ENCODE measurements at regions of chr22 and their contacts with region 1.

Region 1: GRCh38 chr22:30763815-30764686 is 69.4 kb downstream of the OSBP2 start:
- DNase-seq: peak; percentile 49 to 75 (median 57)
- ATAC-seq: peak; percentile 80
- H3K4me3 ChIP-seq: no peak overlapping the region
- H3K27ac ChIP-seq: no peak overlapping the region
- H3K4me1 ChIP-seq: no peaks in the 10 kb centered on the region; a peak in 1 of 5 replicates
- H3K27me3 ChIP-seq: peaks cover 0 to 9% of the 10 kb centered on the region in 2 experiments; a peak in 1 of 5 replicates
- CTCF ChIP-seq: peak; percentile 67 to 80 (median 75)
- EP300 ChIP-seq: no peak
- POLR2A ChIP-seq: no peak
- RAD21 ChIP-seq: peak; percentile 67 to 82

Region 2: DNA sequence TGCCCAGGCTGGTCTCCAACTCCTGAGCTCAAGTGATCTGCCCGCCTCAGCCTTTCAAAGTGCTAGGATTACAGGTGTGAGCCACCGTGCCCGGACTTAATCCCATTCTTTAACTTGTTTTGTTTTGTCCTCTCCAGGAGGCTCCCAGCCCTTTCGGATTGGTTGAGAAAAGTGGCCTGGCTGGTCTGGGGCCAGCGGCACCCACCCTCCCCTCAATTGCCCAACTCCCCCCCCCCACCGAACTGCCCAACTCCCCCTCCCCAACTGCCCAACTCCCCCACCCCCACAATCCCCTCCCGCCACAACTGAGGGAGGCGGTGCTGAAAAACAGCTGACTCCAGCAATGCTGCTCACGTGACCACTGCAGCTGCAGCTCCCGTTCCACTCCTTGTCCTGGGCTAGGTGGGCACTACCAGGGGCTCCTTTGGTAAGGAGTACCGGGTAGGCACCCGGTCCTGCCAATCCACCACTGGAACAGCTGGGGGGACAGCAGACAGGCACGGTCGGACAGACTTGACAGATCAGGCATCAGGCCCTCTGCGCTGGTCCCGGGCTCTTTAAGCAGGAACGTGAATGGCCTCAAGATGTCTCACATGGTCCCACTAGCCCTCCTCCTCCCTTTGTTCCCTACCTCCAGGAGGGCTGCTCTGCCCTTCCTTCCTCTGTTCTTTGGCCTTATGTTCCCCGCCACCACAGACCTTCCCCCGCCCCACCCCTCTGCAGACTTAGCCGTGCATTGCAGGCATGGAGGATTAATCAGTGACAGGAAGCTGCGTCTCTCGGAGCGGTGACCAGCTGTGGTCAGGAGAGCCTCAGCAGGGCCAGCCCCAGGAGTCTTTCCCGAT is 157.4 kb before region 1 on chr22 and contains the start of gene TCN2:
- CTCF ChIA-PET with region 1: no interaction called
- POLR2A ChIA-PET with region 1: no interaction called
- in situ Hi-C with region 1: no loop called
- intact Hi-C with region 1: no loop called
- DNase-seq: peak; percentile 49 to 73 (median 60)
- ATAC-seq: peak; percentile 80
- H3K4me3 ChIP-seq: peak within 1 kb of the TSS; percentile 41
- H3K27ac ChIP-seq: peak within 1 kb of the TSS; percentile 56
- H3K4me1 ChIP-seq: peaks cover 21 to 41% of the 10 kb centered on the region in 2 experiments
- H3K27me3 ChIP-seq: no peaks in the 10 kb centered on the region
- CTCF ChIP-seq: no peak
- EP300 ChIP-seq: no peak
- POLR2A ChIP-seq: no peak
- RAD21 ChIP-seq: no peak
- polyA plus RNA-seq, gene TCN2: 4.8 to 5.4 TPM

Region 3: GRCh38 chr22:30747493-30747892 is 16.6 kb before region 1 on chr22:
- CTCF ChIA-PET with region 1: no interaction called
- POLR2A ChIA-PET with region 1: no interaction called
- in situ Hi-C with region 1: no loop called
- intact Hi-C with region 1: no loop called
- DNase-seq: peak; percentile 17 to 47 (median 36)
- ATAC-seq: peak; percentile 92
- H3K4me3 ChIP-seq: no peak overlapping the region
- H3K27ac ChIP-seq: no peak overlapping the region
- H3K4me1 ChIP-seq: peaks cover 7 to 16% of the 10 kb centered on the region in 2 experiments; a peak in 3 of 5 replicates
- H3K27me3 ChIP-seq: no peaks in the 10 kb centered on the region
- CTCF ChIP-seq: no peak
- EP300 ChIP-seq: no peak
- POLR2A ChIP-seq: 0 out of 2 replicates have a peak, but pooled peaks have one; percentile 28
- RAD21 ChIP-seq: no peak

Region 4: DNA sequence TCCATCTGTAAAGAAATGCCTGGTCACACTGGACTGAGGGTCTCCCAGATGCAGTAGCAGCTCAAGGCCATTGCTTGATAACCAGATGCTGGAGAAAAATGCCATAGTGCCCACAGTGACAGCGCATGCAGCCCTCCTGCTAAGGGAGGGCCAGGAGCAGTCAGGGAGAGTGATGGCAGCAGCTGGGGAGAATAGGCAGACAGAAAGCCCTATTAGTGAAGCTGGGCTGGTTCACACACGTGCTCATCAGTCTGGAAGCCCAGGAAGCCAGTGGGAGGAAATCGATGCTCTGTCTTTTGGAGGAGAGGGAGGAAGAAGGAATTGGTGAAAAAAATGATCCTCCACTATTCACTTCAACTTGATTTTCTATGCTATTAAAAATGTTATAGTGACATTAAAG is 13.5 kb after region 1 on chr22:
- CTCF ChIA-PET with region 1: no interaction called
- POLR2A ChIA-PET with region 1: no interaction called
- in situ Hi-C with region 1: no loop called
- intact Hi-C with region 1: no loop called
- DNase-seq: no peak
- ATAC-seq: no peak
- H3K4me3 ChIP-seq: no peak overlapping the region
- H3K27ac ChIP-seq: no peak overlapping the region
- H3K4me1 ChIP-seq: no peaks in the 10 kb centered on the region
- H3K27me3 ChIP-seq: peaks cover 7 to 11% of the 10 kb centered on the region in 2 experiments; a peak in 4 of 5 replicates
- CTCF ChIP-seq: no peak
- EP300 ChIP-seq: no peak
- POLR2A ChIP-seq: no peak
- RAD21 ChIP-seq: no peak

Region 5: GRCh38 chr22:30890686-30891442 is 126.8 kb after region 1 on chr22:
- CTCF ChIA-PET with region 1: no interaction called
- POLR2A ChIA-PET with region 1: no interaction called
- in situ Hi-C with region 1: no loop called
- intact Hi-C with region 1: loop called (anchors 1 kb)
- DNase-seq: peak; percentile 41 to 47 (median 43)
- ATAC-seq: peak; percentile 89
- H3K4me3 ChIP-seq: no peak overlapping the region
- H3K27ac ChIP-seq: no peak overlapping the region
- H3K4me1 ChIP-seq: peaks cover 0 to 12% of the 10 kb centered on the region in 2 experiments; a peak in 1 of 5 replicates
- H3K27me3 ChIP-seq: no peaks in the 10 kb centered on the region
- CTCF ChIP-seq: peak; percentile 67 to 76 (median 73)
- EP300 ChIP-seq: no peak
- POLR2A ChIP-seq: no peak
- RAD21 ChIP-seq: peak in 1 of 2 experiments; percentile 64; a peak in 3 of 4 replicates

Measured in K562 (cell line).